ENCODE measurements at regions of chr12 and their contacts with region 1.

Region 1: GRCh38 chr12:114744691-114745090 is 60.7 kb upstream of the TBX3 start:
- DNase-seq: peak in 1 of 10 donors; percentile 45

Region 2: DNA sequence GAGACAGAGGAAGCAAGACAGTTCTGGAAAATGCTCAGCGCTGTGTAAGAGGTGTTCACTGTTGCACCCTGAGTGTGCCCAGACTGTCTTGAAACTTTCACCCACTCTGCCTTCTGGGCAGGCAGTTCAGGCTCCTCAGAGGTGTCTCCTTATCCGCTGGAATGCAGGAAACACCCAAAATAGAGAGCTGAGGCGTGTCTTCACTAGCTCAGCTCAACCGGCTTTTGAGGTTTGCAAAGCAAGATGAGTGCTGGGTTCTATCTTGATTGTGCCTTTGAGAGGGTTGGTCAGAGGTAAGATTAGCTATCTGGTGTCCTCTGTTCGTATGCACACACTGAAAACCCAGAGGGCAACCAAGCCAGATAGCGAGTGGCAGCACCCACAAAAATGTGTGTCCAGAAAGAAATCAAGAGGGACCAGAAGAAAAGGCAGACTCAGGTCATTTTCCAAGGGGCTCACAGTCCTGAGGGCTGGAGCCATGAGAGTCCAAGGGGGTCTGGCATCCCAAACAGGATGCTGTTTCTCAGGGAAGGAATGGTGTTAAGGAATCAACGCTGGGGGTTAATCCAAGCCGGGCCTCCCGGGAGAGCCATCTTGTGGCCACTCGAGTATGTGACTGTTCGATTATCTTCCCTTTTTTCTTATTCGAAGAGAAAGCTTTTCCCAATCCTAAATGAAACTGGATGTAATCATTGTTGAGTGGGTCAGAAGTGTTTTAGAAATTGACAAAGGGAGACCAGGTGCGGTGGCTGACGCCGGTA is 107.8 kb before region 1 on chr12:
- intact Hi-C with region 1: no loop called
- DNase-seq: peak in 3 of 10 donors; percentile 13 to 81 (median 31)

Region 3: GRCh38 chr12:114779166-114779565 is 34.5 kb after region 1 on chr12:
- intact Hi-C with region 1: loop called (anchors 2 kb)
- DNase-seq: no peak